Heart left ventricle (tissue), 16 donors: ENCODE measurements at regions of chr9 and their contacts with region 1.

Region 1: DNA sequence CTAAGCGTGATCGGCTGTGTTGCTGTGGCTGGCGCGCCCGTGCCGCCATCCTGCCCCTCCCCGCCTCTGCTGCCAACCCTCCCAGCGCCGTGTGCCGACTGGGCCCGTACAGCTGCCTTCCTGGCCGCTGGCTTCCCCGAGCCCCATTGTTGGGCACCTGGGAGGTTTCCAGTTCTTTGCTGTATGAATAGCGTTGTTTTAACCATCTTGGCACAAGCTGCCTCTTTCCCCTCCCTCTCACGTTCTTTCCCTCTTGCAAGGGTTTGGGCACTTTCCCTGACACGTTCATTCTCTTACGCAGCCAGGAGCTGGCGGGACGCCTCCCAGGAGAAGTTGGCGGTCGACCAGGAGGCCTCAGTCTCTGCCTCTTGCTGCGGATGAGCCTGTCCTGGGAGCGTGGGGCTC is 43.1 kb upstream of the RXRA start:
- DNase-seq: peak; percentile 45 to 87 (median 80)
- ATAC-seq: peak; percentile 69 to 84 (median 75)
- H3K4me3 ChIP-seq: no peak overlapping the region
- H3K27ac ChIP-seq: peak overlapping the region; percentile 21 to 83 (median 67)
- H3K4me1 ChIP-seq: peaks cover 0 to 25% (median 13%) of the 10 kb centered on the region in 12 donors
- H3K27me3 ChIP-seq: peaks cover 0 to 3% (median 0%) of the 10 kb centered on the region in 9 donors
- CTCF ChIP-seq: no peak
- POLR2A ChIP-seq: no peak

Region 2: DNA sequence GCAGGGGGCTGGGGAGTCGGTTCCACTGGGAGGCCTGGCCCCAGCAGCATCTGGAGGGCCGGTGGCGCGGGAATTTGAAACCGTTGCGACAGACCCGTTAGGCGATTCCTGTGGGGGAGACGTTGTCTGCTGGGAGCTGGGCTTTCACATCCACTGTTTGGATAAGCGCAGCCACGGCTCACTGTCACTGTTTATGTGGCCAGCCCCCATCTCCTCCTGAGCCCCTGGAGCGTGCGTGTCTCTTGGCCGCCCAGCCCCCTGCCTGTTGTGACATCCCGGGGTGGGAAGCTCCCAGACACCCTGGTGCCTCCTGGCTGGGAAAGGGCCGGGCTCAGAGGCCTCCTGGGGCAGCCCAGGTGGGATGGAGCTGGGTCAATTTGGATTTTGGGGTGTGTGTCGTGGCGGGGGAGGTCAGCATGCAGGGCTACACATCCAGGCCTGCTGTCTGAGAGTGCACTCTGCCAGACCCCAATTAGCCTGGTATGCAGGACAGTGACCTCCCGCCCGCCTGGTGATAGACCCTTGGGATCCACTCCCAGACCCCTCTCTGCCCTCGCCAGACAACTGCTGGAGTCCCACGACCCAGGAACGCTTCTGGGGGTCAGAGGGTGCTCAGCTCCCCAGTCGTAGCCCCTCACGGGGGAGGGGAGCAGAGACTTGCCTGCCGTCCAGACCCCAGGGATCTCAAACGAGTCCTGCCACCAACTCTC is 56.7 kb before region 1 on chr9:
- intact Hi-C with region 1: loop called in 1 of 10 experiments (anchors 10 kb)
- DNase-seq: peak in 3 of 5 donors; percentile 43 to 76 (median 44)
- ATAC-seq: no peak
- H3K4me3 ChIP-seq: no peak overlapping the region
- H3K27ac ChIP-seq: no peak overlapping the region
- H3K4me1 ChIP-seq: peaks cover 0 to 10% (median 6%) of the 10 kb centered on the region in 12 donors
- H3K27me3 ChIP-seq: no peaks in the 10 kb centered on the region
- CTCF ChIP-seq: no peak
- POLR2A ChIP-seq: no peak

Region 3: GRCh38 chr9:134422301-134423090 is 139.4 kb after region 1 on chr9:
- intact Hi-C with region 1: no loop called
- DNase-seq: peak in 1 of 5 donors; percentile 69
- ATAC-seq: peak; percentile 30 to 61 (median 46)
- H3K4me3 ChIP-seq: no peak overlapping the region
- H3K27ac ChIP-seq: peak overlapping the region in 3 of 12 donors; percentile 9 to 47 (median 31)
- H3K4me1 ChIP-seq: peaks cover 0 to 64% (median 15%) of the 10 kb centered on the region in 12 donors
- H3K27me3 ChIP-seq: no peaks in the 10 kb centered on the region
- CTCF ChIP-seq: no peak
- POLR2A ChIP-seq: no peak

Region 4: DNA sequence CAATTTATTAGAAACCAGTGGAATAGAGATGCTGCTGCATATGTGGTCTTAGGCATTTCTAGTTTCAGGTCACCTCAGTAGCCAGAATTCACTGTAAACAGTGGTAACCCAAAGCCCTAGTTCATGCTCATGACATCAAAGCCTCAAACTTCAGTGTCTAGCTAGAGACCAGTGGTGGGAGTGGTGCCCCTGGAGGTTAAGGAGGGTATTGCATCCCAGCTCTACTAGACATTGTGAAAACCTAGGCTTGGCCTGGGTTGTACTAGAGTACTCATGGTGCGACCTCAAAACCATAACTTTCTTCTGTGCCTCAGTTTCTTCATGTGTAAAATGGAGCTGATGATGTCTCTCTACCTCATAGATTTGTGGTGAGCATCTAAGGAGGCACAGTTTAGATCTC is 377.3 kb after region 1 on chr9:
- intact Hi-C with region 1: no loop called
- DNase-seq: peak in 1 of 5 donors; percentile 10
- ATAC-seq: no peak
- H3K4me3 ChIP-seq: no peak overlapping the region
- H3K27ac ChIP-seq: peak overlapping the region in 1 of 12 donors; percentile 86
- H3K4me1 ChIP-seq: peaks cover 0 to 52% (median 28%) of the 10 kb centered on the region in 12 donors
- H3K27me3 ChIP-seq: no peaks in the 10 kb centered on the region
- CTCF ChIP-seq: peak in 8 of 12 donors; percentile 8 to 43 (median 35)
- POLR2A ChIP-seq: no peak

Region 5: GRCh38 chr9:134922066-134922931 is 639.2 kb after region 1 on chr9:
- intact Hi-C with region 1: no loop called
- DNase-seq: peak in 3 of 5 donors; percentile 42 to 64 (median 62)
- ATAC-seq: peak in 3 of 4 donors; percentile 50 to 85 (median 62)
- H3K4me3 ChIP-seq: no peak overlapping the region
- H3K27ac ChIP-seq: peak overlapping the region in 1 of 12 donors; percentile 56
- H3K4me1 ChIP-seq: peaks cover 0 to 41% (median 0%) of the 10 kb centered on the region in 12 donors
- H3K27me3 ChIP-seq: peaks cover 0 to 6% (median 0%) of the 10 kb centered on the region in 9 donors
- CTCF ChIP-seq: no peak
- POLR2A ChIP-seq: no peak